ENCODE measurements at regions of chr15 and their contacts with region 1.

Region 1: DNA sequence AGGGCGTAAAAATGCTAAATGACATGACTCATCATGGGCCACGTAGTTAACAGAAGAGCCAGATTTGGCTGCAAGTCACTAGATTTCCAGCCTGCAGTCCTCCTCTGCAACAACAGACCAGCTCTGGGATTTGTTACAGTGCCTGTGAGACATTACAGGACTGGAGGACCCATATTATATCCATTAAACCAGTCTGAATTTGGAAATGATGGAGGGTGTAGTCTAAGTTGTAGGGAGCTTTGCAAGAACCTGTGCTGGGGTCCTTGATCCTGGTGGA is 10.8 kb downstream of the ZNF774 start:
- DNase-seq: no peak
- H3K4me3 Mint-ChIP-seq: peak overlapping the region; percentile 31
- H3K27ac Mint-ChIP-seq: peak overlapping the region; percentile 50
- H3K4me1 Mint-ChIP-seq: peaks cover 36% of the 10 kb centered on the region
- H3K27me3 Mint-ChIP-seq: no peaks in the 10 kb centered on the region

Region 2: GRCh38 chr15:90291679-90292356 is 71.1 kb before region 1 on chr15:
- intact Hi-C with region 1: no loop called
- DNase-seq: no peak
- H3K4me3 Mint-ChIP-seq: no peak overlapping the region
- H3K27ac Mint-ChIP-seq: no peak overlapping the region
- H3K4me1 Mint-ChIP-seq: peaks cover 6% of the 10 kb centered on the region
- H3K27me3 Mint-ChIP-seq: peaks cover 19% of the 10 kb centered on the region

Region 3: DNA sequence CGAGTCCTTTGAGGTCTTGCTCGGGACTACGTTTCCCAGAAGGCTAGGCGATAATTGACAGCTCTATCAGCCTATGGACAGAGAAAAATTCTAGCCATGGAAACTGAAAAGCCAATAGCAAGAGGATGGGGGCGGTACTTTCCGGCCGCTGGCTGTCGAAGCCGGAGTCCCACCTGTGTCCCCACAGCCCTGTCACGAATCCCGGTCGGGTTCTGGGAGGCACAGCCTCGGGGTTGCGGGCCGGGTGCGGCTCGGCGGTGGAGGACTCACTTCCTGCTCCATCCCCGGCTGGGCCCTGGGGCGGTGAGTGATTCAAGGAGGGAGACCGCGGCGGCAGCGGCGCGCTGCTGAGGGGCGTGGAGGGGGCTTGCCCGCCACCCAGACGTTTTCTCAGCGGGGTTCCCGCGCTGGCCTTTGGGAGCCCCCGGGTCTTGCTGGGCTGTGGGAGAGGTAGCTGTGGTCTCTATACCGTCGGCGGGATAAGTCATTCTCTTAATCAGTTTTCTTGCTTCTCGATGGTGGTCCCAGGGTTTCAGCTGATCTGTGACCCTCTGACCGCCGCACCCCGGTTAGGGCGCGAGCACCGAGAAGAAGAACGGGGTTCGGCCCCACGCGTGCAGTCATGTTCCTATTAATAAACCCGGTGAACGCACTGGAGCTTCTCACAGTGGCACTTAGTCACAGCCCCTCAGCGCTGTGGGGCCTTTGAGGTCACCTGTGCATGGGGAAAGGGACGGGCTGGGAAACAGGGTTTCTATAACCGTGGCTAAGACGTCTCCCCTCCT is 10.6 kb before region 1 on chr15 and contains the start of gene ZNF774:
- intact Hi-C with region 1: loop called (anchors 1 kb)
- DNase-seq: peak; percentile 88
- H3K4me3 Mint-ChIP-seq: peak within 1 kb of the TSS; percentile 90
- H3K27ac Mint-ChIP-seq: peak within 1 kb of the TSS; percentile 85
- H3K4me1 Mint-ChIP-seq: peaks cover 10% of the 10 kb centered on the region
- H3K27me3 Mint-ChIP-seq: no peaks in the 10 kb centered on the region
- total RNA-seq, gene ZNF774: 1.6 and 2.1 TPM in 2 replicates

Region 4: GRCh38 chr15:90376789-90377188 is 13.9 kb after region 1 on chr15:
- intact Hi-C with region 1: loop called (anchors 1 kb)
- DNase-seq: peak; percentile 65
- H3K4me3 Mint-ChIP-seq: peak overlapping the region; percentile 61
- H3K27ac Mint-ChIP-seq: peak overlapping the region; percentile 97
- H3K4me1 Mint-ChIP-seq: peaks cover 42% of the 10 kb centered on the region
- H3K27me3 Mint-ChIP-seq: no peaks in the 10 kb centered on the region

Region 5: GRCh38 chr15:90436952-90437351 is 74.1 kb after region 1 on chr15:
- intact Hi-C with region 1: loop called (anchors 5 kb)
- DNase-seq: no peak
- H3K4me3 Mint-ChIP-seq: no peak overlapping the region
- H3K27ac Mint-ChIP-seq: no peak overlapping the region
- H3K4me1 Mint-ChIP-seq: peaks cover 30% of the 10 kb centered on the region
- H3K27me3 Mint-ChIP-seq: no peaks in the 10 kb centered on the region

Region 6: DNA sequence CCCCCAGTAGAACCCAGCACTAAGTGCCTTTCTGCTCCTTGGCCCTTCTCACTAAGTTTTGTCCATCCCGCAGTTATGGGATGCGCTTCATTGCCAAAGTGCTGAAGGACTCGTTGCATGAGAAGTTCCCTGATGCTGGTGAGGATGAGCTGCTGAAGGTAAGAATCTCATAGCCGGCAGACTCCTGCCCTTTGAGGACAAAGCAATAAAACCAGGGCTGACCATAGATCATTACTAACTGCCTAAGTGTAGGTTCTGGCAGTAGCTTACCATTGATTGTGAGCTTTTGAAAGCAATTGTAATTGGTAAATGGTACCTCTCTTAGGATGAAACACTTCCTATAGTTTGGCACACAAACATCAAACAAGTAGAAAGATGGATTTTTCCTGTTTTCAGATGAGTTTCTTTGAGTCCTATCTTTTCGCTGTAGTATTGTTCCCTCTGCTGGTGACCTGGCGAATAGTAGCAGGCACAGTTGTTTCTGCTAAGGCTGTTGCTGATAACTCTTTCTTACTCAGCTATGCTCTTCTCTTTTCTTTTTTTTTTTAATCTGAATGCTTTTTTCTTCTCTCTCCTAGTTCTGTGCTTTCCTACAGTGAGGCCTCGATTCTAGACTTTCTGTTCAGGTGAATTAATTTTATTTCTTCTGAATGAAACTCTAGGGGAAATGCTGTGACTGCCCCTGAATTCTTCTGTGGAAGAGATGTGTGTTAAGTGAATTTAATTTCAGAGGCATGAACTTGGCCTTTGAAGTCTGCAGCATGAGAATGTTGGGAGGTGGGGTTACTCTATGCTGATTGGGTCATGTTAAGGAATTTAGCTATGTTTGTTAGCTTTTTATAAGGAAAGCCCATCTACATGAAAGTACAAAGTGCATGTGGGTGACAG is 119.5 kb after region 1 on chr15:
- intact Hi-C with region 1: loop called (anchors 1 kb)
- DNase-seq: peak; percentile 11
- H3K4me3 Mint-ChIP-seq: no peak overlapping the region
- H3K27ac Mint-ChIP-seq: peak overlapping the region; percentile 13
- H3K4me1 Mint-ChIP-seq: peaks cover 43% of the 10 kb centered on the region
- H3K27me3 Mint-ChIP-seq: no peaks in the 10 kb centered on the region

Measured in activated T-helper 1 cell treated with anti-CD3 and anti-CD28 coated beads, Interleukin-12 subunit alpha, Interleukin-12 subunit beta, Interleukin-2, Interleukin-4 antibody, amounts not matched to agents 30 ng/mL and 10 ng/mL and 1 ng/mL, durations not matched to agents 14 hours and 24 hours and 36 hours (primary cell).